Endothelial cell of umbilical vein (primary cell): ENCODE measurements at regions of chr6 and their contacts with region 1.

Region 1: GRCh38 chr6:121726596-121726995 is 291.1 kb downstream of the GJA1 start:
- DNase-seq: peak; percentile 83
- H3K4me3 ChIP-seq: no peak overlapping the region
- H3K27ac ChIP-seq: peak overlapping the region; percentile 29
- H3K4me1 ChIP-seq: peaks cover 10% of the 10 kb centered on the region
- H3K27me3 ChIP-seq: no peaks in the 10 kb centered on the region
- CTCF ChIP-seq: no peak
- POLR2A ChIP-seq: no peak

Region 2: GRCh38 chr6:121334299-121335086 is 392.1 kb before region 1 on chr6 and contains the start of gene TBC1D32:
- CTCF ChIA-PET with region 1: no interaction called
- POLR2A ChIA-PET with region 1: no interaction called
- dilution Hi-C with region 1: no loop called
- intact Hi-C with region 1: loop called (anchors 10 kb)
- DNase-seq: peak; percentile 95
- H3K4me3 ChIP-seq: peak within 1 kb of the TSS; percentile 82 to 99 (median 90)
- H3K27ac ChIP-seq: peak within 1 kb of the TSS; percentile 97
- H3K4me1 ChIP-seq: peaks cover 5% of the 10 kb centered on the region
- H3K27me3 ChIP-seq: no peaks in the 10 kb centered on the region
- CTCF ChIP-seq: no peak
- POLR2A ChIP-seq: peak; percentile 58
- total RNA-seq, gene TBC1D32: 4.0 and 4.3 TPM in 2 replicates

Region 3: GRCh38 chr6:121826156-121826810 is 99.7 kb after region 1 on chr6:
- CTCF ChIA-PET with region 1: interaction called, 4 read pairs
- POLR2A ChIA-PET with region 1: no interaction called
- dilution Hi-C with region 1: no loop called
- intact Hi-C with region 1: loop called (anchors 5 kb)
- DNase-seq: peak; percentile 94
- H3K4me3 ChIP-seq: no peak overlapping the region
- H3K27ac ChIP-seq: peak overlapping the region; percentile 86
- H3K4me1 ChIP-seq: peaks cover 15% of the 10 kb centered on the region
- H3K27me3 ChIP-seq: no peaks in the 10 kb centered on the region
- CTCF ChIP-seq: no peak
- POLR2A ChIP-seq: no peak